ENCODE measurements at regions of chr7 and their contacts with region 1.

Region 1: DNA sequence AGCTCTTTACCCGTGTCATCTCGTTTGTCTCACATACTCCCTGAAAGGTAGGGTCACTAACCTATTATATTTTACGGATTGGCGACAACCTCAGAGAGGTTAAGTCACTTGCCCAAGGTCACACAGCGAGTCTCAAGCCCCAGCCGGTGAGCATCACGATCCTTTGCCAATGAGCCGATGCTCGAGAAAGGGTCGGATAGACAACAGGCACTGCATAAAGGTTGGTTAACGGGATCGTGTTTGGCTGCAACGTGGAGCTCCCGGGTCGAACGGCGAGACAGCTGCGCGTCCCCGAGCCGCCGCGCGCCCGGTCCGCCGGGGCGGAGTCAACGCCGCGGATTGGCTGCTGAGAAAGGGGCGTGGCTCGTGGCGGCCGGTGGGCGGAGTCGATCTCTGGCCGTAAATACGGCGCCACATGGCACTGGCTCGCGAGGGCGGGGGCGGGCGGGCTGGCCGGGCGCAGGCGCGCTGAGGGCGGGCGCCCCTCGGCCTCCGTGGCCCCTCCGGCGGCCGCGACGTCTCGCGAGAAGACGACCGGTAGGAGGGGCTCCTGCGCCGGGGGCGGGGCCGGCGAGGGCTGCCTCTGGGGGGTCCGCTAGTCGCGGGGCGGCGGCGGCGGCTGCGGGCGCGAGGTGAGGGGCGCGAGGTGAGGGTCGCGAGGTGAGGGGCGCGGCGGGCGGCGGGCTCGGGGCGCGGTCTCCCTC is at the start of gene CHST12:
- DNase-seq: peak; percentile 91
- ATAC-seq: peak; percentile 77
- H3K4me3 Mint-ChIP-seq: peak within 1 kb of the TSS; percentile 85
- H3K27ac Mint-ChIP-seq: peak within 1 kb of the TSS; percentile 93
- H3K4me1 Mint-ChIP-seq: peaks cover 47% of the 10 kb centered on the region
- H3K27me3 Mint-ChIP-seq: no peaks in the 10 kb centered on the region
- CTCF ChIP-seq: no peak
- total RNA-seq, gene CHST12: 10.3 and 14.4 TPM in 2 replicates

Region 2: GRCh38 chr7:2444476-2444875 is 41.3 kb after region 1 on chr7:
- CTCF ChIA-PET with region 1: no interaction called
- POLR2A ChIA-PET with region 1: no interaction called
- intact Hi-C with region 1: loop called (anchors 5 kb)
- DNase-seq: no peak
- ATAC-seq: no peak
- H3K4me3 Mint-ChIP-seq: no peak overlapping the region
- H3K27ac Mint-ChIP-seq: no peak overlapping the region
- H3K4me1 Mint-ChIP-seq: no peaks in the 10 kb centered on the region
- H3K27me3 Mint-ChIP-seq: no peaks in the 10 kb centered on the region
- CTCF ChIP-seq: no peak